Panc1 (cell line): ENCODE measurements at regions of chr19 and their contacts with region 1.

Region 1: GRCh38 chr19:54740134-54740497 is 1.8 kb downstream of the KIR2DL3 start:
- DNase-seq: no peak
- ATAC-seq: no peak
- H3K4me3 ChIP-seq: no peak overlapping the region
- H3K27ac ChIP-seq: no peak overlapping the region
- H3K4me1 ChIP-seq: no peaks in the 10 kb centered on the region
- H3K27me3 ChIP-seq: no peaks in the 10 kb centered on the region
- CTCF ChIP-seq: no peak

Region 2: GRCh38 chr19:54937926-54938325 is 197.8 kb after region 1 on chr19:
- CTCF ChIA-PET with region 1: interaction called, 10 read pairs
- POLR2A ChIA-PET with region 1: no interaction called
- in situ Hi-C with region 1: no loop called
- intact Hi-C with region 1: no loop called
- DNase-seq: no peak
- ATAC-seq: no peak
- H3K4me3 ChIP-seq: no peak overlapping the region
- H3K27ac ChIP-seq: no peak overlapping the region
- H3K4me1 ChIP-seq: no peaks in the 10 kb centered on the region
- H3K27me3 ChIP-seq: no peaks in the 10 kb centered on the region
- CTCF ChIP-seq: no peak